ENCODE measurements at regions of chr3 and their contacts with region 1.

Region 1: DNA sequence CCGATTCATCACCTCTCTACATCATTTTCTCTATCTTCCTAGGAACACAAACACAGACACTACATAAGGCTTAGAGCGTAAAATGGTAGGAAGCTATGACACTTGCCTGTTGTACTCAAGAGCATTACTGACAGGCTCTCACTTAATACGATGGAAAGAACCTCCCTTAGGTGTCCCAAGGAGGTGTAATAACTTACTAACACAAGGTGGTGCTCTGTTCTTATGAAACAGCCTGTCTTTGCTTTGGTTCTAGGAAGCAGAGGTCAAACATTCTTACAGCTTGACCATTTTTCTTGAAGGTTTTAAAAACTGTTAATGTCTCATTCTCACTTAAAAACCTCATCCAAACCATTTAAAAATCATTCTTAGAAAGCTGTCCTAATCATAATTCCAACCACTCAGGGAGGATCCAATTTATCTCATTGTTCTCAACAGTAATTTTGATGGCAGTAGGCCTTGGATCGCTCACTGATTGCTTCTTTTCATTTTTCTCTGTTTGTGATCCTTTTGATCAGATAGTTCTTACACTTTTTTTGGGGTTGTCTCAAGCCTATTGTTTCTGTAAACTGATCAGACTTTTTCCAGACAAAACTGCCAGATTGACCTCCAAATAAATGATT is 317.8 kb upstream of the AGTR1 start:
- DNase-seq: peak; percentile 15 to 51 (median 33)
- H3K4me3 ChIP-seq: no peak overlapping the region
- H3K27ac ChIP-seq: no peak overlapping the region
- H3K4me1 ChIP-seq: no peaks in the 10 kb centered on the region
- H3K27me3 ChIP-seq: no peaks in the 10 kb centered on the region

Region 2: DNA sequence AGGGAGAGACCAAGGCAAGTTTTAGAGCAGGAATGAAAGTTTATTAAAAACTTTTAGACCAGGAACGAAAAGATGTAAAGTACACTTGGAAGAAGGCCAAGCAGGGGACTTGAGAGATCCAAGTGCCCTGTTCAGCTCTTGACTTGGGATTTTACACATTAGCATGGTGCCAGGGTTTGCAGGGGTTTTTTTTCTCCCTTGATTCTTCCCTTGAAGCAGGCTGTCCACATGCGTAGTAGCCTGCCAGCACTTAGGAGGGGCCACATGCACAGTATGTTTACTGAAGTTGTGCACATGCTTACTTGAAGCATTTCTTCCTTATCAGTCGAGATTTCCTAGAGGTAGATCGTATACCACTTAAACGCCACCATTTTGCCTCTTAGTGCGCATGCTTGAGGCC is 40.4 kb after region 1 on chr3:
- CTCF ChIA-PET with region 1: no interaction called
- POLR2A ChIA-PET with region 1: no interaction called
- DNase-seq: no peak
- H3K4me3 ChIP-seq: no peak overlapping the region
- H3K27ac ChIP-seq: no peak overlapping the region
- H3K4me1 ChIP-seq: no peaks in the 10 kb centered on the region
- H3K27me3 ChIP-seq: peaks cover 0 to 2% (median 0%) of the 10 kb centered on the region in 5 experiments

Region 3: DNA sequence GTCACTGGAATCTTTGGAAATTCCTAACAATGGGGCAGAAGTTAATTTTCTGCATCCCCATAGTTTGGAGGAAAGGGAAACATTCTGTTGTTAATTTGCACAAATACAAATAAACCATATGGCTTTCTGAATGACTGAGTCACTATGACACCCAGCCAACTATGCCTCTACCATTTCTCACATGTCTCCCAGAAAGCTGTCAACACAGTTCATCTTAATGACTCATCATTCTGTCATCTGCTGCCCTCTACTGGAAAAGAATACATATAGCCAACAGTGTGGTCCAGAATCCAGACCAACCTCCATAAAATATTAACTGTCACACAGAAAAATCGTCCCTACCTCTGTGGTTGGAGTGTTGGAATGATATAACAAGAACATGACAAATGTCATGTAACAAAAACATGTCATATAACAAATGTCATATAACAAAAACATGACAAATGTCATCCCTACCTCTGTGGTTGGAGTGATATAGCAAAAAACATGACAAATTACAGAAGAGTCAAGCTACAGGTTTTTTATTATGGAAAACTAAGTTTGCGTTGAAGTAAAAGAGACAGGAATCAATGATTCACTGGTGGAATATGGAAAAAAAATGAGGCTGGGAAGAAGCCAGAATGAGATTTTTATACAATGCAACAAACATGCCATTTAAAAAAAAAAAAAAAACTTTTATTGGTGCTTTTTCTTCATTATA is 563.8 kb after region 1 on chr3:
- CTCF ChIA-PET with region 1: interaction called, 25 read pairs
- POLR2A ChIA-PET with region 1: no interaction called
- DNase-seq: peak; percentile 55 to 77 (median 75)
- H3K4me3 ChIP-seq: no peak overlapping the region
- H3K27ac ChIP-seq: no peak overlapping the region
- H3K4me1 ChIP-seq: no peaks in the 10 kb centered on the region
- H3K27me3 ChIP-seq: no peaks in the 10 kb centered on the region

Measured in common myeloid progenitor, CD34-positive (primary cell).